Left ventricle myocardium inferior (tissue), 1 donor: ENCODE measurements at regions of chr11 and their contacts with region 1.

Region 1: DNA sequence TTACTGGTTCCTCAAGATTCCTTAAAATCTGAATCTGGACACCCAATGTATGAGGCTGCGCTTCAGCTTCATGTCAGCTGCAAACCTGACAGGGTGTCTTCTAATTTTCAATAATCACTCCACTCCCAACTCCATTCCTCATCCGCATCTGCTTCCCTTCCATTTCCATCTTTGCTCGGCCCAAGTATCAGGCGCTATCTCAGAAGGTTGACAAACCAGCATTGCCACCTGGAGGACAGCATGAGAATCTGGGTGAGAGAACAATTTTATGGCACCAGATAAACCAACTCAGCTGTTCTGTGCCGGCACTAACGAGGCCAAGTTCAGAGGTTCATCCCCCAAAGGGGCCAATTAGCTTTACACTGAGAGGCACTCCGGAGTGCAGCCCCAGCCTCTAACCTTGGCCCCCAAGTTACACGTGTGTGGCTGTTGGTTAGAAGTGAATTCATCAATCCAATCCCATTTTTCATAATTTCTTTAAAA is 79.1 kb upstream of the LMO2 start:
- DNase-seq: no peak
- H3K4me3 ChIP-seq: no peak overlapping the region
- H3K27ac ChIP-seq: no peak overlapping the region
- H3K4me1 ChIP-seq: no peaks in the 10 kb centered on the region
- H3K27me3 ChIP-seq: no peaks in the 10 kb centered on the region
- CTCF ChIP-seq: peak; percentile 77

Region 2: GRCh38 chr11:33362051-33362910 is 608.7 kb before region 1 on chr11:
- intact Hi-C with region 1: no loop called
- DNase-seq: no peak
- H3K4me3 ChIP-seq: no peak overlapping the region
- H3K27ac ChIP-seq: no peak overlapping the region
- H3K4me1 ChIP-seq: peaks cover 11% of the 10 kb centered on the region
- H3K27me3 ChIP-seq: no peaks in the 10 kb centered on the region
- CTCF ChIP-seq: peak; percentile 77

Region 3: GRCh38 chr11:33863418-33864172 is 107.4 kb before region 1 on chr11:
- intact Hi-C with region 1: loop called (anchors 5 kb)
- DNase-seq: no peak
- H3K4me3 ChIP-seq: no peak overlapping the region
- H3K27ac ChIP-seq: no peak overlapping the region
- H3K4me1 ChIP-seq: peaks cover 23% of the 10 kb centered on the region
- H3K27me3 ChIP-seq: peaks cover 22% of the 10 kb centered on the region
- CTCF ChIP-seq: no peak